K562 (cell line): ENCODE measurements at regions of chr6 and their contacts with region 1.

Region 1: GRCh38 chr6:10771371-10771894 is 23.8 kb downstream of the TMEM14B start:
- DNase-seq: peak; percentile 47 to 94 (median 70)
- ATAC-seq: peak; percentile 99
- H3K4me3 ChIP-seq: no peak overlapping the region; the same call in 1 of the 2 replicates
- H3K27ac ChIP-seq: peak overlapping the region; percentile 5; the same call in 2 of the 3 replicates
- H3K4me1 ChIP-seq: peaks cover 10 to 18% of the 10 kb centered on the region in 2 experiments; a peak in 4 of 5 replicates
- H3K27me3 ChIP-seq: no peaks in the 10 kb centered on the region
- CTCF ChIP-seq: peak; percentile 33 to 49 (median 36); a peak in 5 of 6 replicates
- EP300 ChIP-seq: peak; percentile 97
- POLR2A ChIP-seq: no peak
- RAD21 ChIP-seq: peak in 1 of 2 experiments; percentile 37; a peak in 3 of 4 replicates

Region 2: GRCh38 chr6:10756085-10756484 is 15.3 kb before region 1 on chr6:
- CTCF ChIA-PET with region 1: no interaction called
- POLR2A ChIA-PET with region 1: interaction called, 11 read pairs
- in situ Hi-C with region 1: no loop called
- intact Hi-C with region 1: no loop called
- DNase-seq: no peak
- ATAC-seq: no peak
- H3K4me3 ChIP-seq: no peak overlapping the region
- H3K27ac ChIP-seq: no peak overlapping the region
- H3K4me1 ChIP-seq: peaks cover under 1 to 16% of the 10 kb centered on the region in 2 experiments; a peak in 3 of 5 replicates
- H3K27me3 ChIP-seq: no peaks in the 10 kb centered on the region
- CTCF ChIP-seq: no peak
- EP300 ChIP-seq: no peak
- POLR2A ChIP-seq: no peak
- RAD21 ChIP-seq: no peak